Testis (tissue), 5 donors: ENCODE measurements at regions of chr15 and their contacts with region 1.

Region 1: DNA sequence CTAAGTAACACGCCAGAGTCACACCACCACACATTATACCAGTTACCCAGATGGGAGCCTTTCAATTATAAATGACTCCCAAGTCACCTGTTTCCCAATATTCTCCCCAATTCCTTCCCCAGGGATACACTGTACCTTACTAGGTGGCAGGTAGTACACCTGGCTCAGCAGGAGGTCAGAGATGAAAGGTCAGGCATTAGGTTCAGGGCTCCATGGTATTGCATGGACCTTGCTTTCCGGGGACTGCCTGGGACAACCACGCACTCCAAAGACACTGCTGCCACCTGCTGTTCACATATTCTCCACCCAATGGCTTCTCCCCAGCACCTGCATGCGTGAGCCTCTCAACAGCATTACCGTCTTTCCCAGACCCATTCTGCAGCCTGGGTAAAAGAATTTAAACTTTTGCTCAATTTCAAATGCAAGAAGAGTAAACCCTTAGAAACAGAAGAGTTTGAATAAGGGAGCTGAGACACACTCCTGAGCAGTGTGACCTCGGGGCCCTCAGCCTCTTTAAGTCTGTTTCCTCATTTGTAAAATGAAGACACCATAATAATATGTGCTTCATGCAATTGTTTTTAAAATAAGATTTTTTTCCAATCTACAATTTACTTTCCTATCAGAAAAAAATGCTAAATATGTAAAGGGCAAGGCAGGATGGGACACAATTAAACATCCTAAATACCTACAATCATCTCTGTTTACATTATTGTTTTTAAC is 28.0 kb upstream of the LACTB start:
- DNase-seq: peak; percentile 91
- H3K4me3 ChIP-seq: no peak overlapping the region
- H3K27ac ChIP-seq: no peak overlapping the region
- H3K4me1 ChIP-seq: no peaks in the 10 kb centered on the region
- H3K27me3 ChIP-seq: no peaks in the 10 kb centered on the region
- CTCF ChIP-seq: peak; percentile 68 to 83 (median 75)
- POLR2A ChIP-seq: no peak

Region 2: DNA sequence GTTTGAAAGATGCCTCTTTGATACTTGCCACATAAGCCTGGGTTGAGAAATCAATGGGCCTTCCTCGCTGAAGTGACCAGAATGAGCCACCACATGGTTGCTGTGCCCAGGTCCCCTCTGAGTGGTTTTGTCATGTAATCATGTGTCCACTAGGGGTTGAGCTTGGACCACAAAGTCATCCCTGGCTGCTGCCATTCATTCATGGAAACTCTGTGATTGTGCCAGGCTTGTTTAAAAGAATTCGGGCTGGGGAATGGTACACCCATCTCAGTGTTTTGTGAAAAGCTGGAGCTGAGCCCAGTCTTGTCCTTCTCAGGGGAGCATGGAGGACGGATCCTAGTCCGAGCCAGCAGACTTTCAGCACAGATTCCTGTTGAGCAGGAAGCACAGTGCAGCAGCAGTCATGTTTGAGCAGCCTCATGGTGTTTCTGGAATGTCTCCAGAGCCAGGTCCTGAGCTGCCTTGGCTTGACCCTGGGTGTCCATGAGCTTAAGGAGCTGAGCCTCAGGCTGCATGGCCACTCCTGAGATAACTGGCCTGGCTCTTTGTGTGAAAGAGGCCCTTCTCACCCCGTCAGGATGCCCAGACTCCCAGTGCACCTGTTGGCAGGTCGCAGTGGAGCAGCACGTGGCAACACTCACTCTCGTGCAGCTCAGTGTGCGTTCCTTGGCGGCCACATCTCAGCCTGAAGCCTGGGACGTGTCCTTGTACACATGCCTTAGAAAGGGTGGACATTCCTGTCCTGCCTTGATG is 311.4 kb before region 1 on chr15:
- intact Hi-C with region 1: loop called (anchors 10 kb)
- DNase-seq: peak; percentile 84
- H3K4me3 ChIP-seq: no peak overlapping the region
- H3K27ac ChIP-seq: no peak overlapping the region
- H3K4me1 ChIP-seq: peaks cover 4% of the 10 kb centered on the region
- H3K27me3 ChIP-seq: no peaks in the 10 kb centered on the region
- CTCF ChIP-seq: peak; percentile 57 to 91 (median 82)
- POLR2A ChIP-seq: no peak